ENCODE measurements at regions of chr2 and their contacts with region 1.

Region 1: DNA sequence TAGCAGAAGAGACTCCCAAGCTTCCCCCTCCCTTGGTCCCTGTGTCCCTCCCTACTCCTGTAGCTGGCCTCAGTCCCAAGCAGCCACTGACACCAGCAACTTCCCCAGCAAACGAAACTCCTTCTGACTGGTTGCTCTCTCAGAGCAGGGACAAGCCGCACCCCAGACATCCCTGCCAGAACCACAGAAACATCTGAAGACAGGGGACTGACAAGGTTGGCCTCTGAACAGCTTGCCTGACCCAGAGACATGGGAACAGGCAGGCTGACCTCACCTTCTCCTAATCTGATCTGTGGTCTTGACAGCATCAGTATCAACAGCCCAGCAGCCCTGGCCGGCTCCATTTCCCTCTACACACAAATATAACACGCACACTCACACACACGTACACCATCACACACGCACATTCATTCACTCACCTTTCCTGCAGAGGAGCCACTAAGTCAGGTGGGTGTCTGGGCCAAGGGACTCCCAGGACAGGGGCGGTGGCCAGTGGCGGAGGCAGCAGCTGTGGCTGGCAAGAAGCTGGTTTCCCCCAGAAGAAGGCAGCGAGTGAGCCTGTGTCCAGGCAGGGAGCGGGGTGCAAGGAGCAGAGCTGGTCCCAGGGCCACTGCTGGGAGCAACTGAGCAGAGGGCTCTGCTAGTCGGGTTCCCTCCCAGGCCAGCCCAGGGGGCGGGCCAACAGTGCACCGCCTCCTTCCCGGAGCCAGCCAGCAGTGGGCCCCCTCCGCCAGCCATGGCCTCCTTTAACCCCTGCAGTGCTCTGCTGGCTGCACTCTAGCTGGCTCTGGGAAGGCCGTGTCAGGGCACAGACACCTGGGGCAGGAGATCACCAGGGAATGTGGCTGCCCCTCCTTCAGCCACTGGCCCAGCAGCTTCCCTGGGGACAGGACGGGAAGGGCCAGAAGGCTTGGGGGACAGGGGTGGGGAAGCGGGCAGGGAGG is 59.1 kb downstream of the TNS1 start:
- DNase-seq: peak; percentile 74
- H3K4me3 ChIP-seq: peak overlapping the region; percentile 37 to 38
- H3K27ac ChIP-seq: peak overlapping the region; percentile 91 to 92
- H3K4me1 ChIP-seq: no peaks in the 10 kb centered on the region
- H3K27me3 ChIP-seq: no peaks in the 10 kb centered on the region
- CTCF ChIP-seq: peak in 3 of 4 experiments; percentile 20 to 32 (median 27)
- POLR2A ChIP-seq: peak; percentile 94

Region 2: DNA sequence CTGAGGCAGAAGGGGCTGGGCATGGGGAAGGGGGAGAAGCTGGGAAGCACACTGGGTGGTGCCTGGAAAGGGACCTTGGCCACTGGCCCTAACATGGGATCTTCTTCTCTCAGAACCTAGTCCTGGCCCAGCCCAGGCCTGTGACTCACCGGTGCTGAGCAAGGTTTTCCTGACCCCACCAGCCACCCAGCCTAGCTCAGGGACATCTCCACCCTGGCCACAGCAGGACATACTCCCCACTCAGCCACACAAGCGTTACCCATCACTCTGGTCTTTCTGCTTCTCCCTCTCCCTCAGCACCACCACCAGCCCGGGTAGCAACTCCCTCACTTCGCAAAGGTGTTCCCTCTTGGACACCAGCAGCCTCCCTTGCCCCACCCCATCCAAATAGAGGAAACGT is 36.3 kb after region 1 on chr2:
- intact Hi-C with region 1: loop called (anchors 2 kb)
- DNase-seq: no peak
- H3K4me3 ChIP-seq: no peak overlapping the region
- H3K27ac ChIP-seq: peak overlapping the region; percentile 78 to 87
- H3K4me1 ChIP-seq: peaks cover 5% of the 10 kb centered on the region
- H3K27me3 ChIP-seq: no peaks in the 10 kb centered on the region
- CTCF ChIP-seq: no peak
- POLR2A ChIP-seq: no peak

Measured in prostate gland (tissue), 2 donors.